Caco-2 (cell line): ENCODE measurements at regions of chr10 and their contacts with region 1.

Region 1: GRCh38 chr10:62379972-62380371 is 5.8 kb downstream of the ZNF365 start:
- DNase-seq: peak in 1 of 2 experiments; percentile 40
- H3K4me3 ChIP-seq: no peak overlapping the region
- H3K4me3 Mint-ChIP-seq: no peak overlapping the region
- H3K27ac Mint-ChIP-seq: no peak overlapping the region
- H3K4me1 ChIP-seq: peaks cover 11% of the 10 kb centered on the region
- H3K4me1 Mint-ChIP-seq: no peaks in the 10 kb centered on the region
- H3K27me3 ChIP-seq: peaks cover 5% of the 10 kb centered on the region
- H3K27me3 Mint-ChIP-seq: peaks cover 14% of the 10 kb centered on the region
- CTCF ChIP-seq: no peak

Region 2: GRCh38 chr10:62268399-62269114 is 111.4 kb before region 1 on chr10 and contains the start of gene RTKN2:
- CTCF ChIA-PET with region 1: interaction called, 3 read pairs
- POLR2A ChIA-PET with region 1: no interaction called
- intact Hi-C with region 1: loop called (anchors 2 kb)
- DNase-seq: peak; percentile 99 to 100
- H3K4me3 ChIP-seq: peak within 1 kb of the TSS; percentile 66
- H3K4me3 Mint-ChIP-seq: peak within 1 kb of the TSS; percentile 78
- H3K27ac Mint-ChIP-seq: peak within 1 kb of the TSS; percentile 61
- H3K4me1 ChIP-seq: peaks cover 23% of the 10 kb centered on the region
- H3K4me1 Mint-ChIP-seq: peaks cover 26% of the 10 kb centered on the region
- H3K27me3 ChIP-seq: no peaks in the 10 kb centered on the region
- H3K27me3 Mint-ChIP-seq: peaks cover 7% of the 10 kb centered on the region
- CTCF ChIP-seq: no peak
- total RNA-seq, gene RTKN2: 36.2 and 37.1 TPM in 2 replicates

Region 3: DNA sequence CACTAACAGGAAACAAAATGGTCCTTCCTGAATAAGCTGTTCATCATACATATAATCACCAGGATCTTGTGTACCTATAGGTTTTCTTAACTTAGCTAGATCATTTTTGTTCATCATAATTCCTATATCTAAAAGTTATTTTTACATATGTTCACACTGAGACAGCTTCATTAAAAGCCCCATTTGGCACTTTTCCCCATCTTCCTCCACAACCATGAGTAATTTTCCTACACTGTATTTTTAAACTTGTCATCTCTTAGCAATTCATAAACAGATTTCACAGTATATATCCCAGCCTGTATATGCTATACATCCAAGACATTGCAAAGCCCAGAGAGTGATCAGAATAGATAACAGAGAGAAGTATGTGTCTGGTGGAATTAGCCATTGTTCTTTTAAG is 22.5 kb after region 1 on chr10:
- CTCF ChIA-PET with region 1: no interaction called
- POLR2A ChIA-PET with region 1: no interaction called
- intact Hi-C with region 1: no loop called
- DNase-seq: no peak
- H3K4me3 ChIP-seq: no peak overlapping the region
- H3K4me3 Mint-ChIP-seq: no peak overlapping the region
- H3K27ac Mint-ChIP-seq: no peak overlapping the region
- H3K4me1 ChIP-seq: no peaks in the 10 kb centered on the region
- H3K4me1 Mint-ChIP-seq: no peaks in the 10 kb centered on the region
- H3K27me3 ChIP-seq: no peaks in the 10 kb centered on the region
- H3K27me3 Mint-ChIP-seq: peaks cover 13% of the 10 kb centered on the region
- CTCF ChIP-seq: no peak